Mammary epithelial cell (primary cell): ENCODE measurements at regions of chr7 and their contacts with region 1.

Region 1: DNA sequence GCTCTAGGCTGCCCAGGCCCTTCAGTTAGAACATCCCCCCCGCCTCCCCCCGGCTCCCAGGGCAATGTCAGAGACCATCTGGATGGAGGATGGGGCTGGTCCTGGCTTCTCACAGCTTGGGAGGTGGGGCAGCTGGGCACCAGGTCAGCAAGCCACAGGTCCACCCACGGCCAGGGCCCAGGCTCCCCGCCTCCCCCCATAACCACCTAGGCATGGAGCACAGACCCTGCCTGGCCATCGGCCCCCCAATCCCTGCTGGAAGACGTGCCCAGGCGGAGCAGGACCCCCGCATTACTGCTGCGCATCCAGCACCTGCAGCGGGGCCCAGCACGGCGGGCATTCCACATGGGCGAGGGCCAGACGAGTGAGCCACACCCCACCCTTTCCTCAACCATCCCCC is 169.6 kb downstream of the ELFN1 start:
- DNase-seq: no peak
- H3K4me3 ChIP-seq: no peak overlapping the region
- H3K27ac ChIP-seq: no peak overlapping the region
- H3K4me1 ChIP-seq: no peaks in the 10 kb centered on the region
- H3K27me3 ChIP-seq: no peaks in the 10 kb centered on the region
- CTCF ChIP-seq: no peak

Region 2: DNA sequence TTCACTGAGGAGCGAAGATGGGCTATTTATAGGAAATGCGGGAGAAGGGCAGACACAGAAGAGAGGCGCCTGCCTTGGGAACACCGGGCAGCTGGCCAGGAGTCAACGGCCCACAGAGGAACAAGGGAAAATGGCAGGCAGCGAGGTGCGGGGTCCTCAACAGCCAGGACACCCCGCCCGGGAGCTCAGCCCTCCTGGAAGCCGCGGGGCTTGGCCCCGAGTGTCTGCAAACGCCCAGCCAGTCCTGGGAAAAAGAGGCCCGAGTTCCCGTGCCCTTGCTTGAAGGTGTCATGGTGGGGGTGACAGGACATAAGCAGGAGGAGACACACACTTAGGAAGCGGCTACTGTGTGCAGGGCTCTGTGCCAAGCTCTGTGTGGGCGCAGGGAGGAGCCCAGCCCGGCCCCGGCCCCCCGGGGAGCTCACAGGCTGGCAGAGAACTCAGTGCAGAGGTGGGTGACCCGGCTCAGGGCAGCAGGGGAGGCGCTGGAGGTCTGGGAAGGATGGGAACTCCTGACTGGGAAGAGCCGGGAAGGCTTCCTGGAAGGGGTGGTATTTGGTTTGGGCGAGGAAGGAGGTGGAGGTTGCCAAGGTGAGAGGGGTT is 89.7 kb before region 1 on chr7:
- CTCF ChIA-PET with region 1: no interaction called
- dilution Hi-C with region 1: no loop called
- in situ Hi-C with region 1: no loop called
- intact Hi-C with region 1: no loop called
- DNase-seq: no peak
- H3K4me3 ChIP-seq: no peak overlapping the region
- H3K27ac ChIP-seq: no peak overlapping the region
- H3K4me1 ChIP-seq: no peaks in the 10 kb centered on the region
- H3K27me3 ChIP-seq: peaks cover 9% of the 10 kb centered on the region
- CTCF ChIP-seq: no peak

Region 3: DNA sequence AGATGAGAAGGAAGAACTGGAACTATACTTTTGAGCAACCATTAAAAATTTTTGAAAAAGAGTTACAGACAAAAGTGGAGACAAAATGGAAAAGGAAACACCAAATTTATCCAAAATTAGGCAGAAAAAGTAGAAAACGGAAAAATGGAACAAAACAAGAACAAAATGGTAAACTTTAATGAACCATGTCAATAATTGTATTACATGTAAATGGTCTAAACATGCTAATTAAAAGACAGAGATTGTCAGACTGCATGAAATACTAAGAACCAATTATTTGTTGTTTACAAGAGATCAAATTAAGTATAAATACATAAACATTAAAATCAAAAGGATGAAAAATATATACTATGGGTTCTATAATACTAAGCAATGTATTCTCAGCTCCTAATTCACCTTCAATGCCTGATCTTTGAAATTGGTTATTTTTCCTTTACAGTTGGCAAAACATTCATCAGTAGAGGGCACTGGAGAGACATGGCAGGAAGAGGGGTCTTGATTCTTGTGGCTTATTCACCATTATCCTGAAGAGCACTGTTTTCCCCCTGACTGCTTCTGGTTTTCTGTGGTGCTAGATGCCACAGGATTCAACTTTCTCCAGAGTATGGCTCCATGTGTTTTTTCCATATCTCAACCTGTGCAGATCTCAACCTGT is 44.7 kb before region 1 on chr7:
- CTCF ChIA-PET with region 1: no interaction called
- dilution Hi-C with region 1: loop called (anchors 5 kb)
- in situ Hi-C with region 1: no loop called
- intact Hi-C with region 1: no loop called
- DNase-seq: no peak
- H3K4me3 ChIP-seq: no peak overlapping the region
- H3K27ac ChIP-seq: no peak overlapping the region
- H3K4me1 ChIP-seq: no peaks in the 10 kb centered on the region
- H3K27me3 ChIP-seq: no peaks in the 10 kb centered on the region
- CTCF ChIP-seq: no peak

Region 4: DNA sequence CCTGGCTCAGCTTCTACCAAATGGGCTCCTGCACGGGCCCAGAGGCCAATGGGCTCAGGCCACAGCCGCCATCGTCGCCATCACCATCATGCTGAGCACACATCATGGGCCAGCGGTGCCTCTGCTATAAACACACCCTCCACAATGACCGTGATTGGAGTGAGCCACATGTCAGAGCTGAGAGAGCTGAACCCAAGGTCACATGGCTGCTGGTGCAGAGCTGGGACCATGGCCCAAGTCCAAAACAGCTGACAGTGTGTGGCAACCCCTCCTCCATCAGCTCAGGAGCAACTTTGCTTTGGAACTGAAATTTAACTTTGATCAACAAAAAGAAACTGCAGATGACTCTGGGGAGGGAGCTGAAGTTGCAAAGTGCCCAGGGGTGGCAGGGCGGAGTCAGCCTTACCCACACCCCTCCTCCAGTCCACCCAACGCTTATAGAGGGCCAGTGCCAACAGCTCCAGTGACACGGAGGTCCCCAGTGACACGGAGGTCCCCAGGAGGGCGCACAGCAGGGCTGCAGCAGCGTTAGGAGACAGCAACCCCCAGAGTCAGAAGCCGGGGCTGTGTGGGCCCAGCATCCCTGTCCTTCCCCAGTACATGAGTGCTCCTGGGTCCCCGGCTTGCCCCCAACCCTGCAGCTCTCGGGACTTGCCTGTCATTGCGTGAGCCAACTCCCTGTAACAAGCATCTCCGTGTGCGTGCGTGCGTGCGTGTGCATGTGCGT is 80.0 kb after region 1 on chr7:
- CTCF ChIA-PET with region 1: no interaction called
- dilution Hi-C with region 1: loop called (anchors 5 kb)
- in situ Hi-C with region 1: no loop called
- intact Hi-C with region 1: no loop called
- DNase-seq: no peak
- H3K4me3 ChIP-seq: no peak overlapping the region
- H3K27ac ChIP-seq: no peak overlapping the region
- H3K4me1 ChIP-seq: peaks cover 12% of the 10 kb centered on the region
- H3K27me3 ChIP-seq: no peaks in the 10 kb centered on the region
- CTCF ChIP-seq: no peak

Region 5: DNA sequence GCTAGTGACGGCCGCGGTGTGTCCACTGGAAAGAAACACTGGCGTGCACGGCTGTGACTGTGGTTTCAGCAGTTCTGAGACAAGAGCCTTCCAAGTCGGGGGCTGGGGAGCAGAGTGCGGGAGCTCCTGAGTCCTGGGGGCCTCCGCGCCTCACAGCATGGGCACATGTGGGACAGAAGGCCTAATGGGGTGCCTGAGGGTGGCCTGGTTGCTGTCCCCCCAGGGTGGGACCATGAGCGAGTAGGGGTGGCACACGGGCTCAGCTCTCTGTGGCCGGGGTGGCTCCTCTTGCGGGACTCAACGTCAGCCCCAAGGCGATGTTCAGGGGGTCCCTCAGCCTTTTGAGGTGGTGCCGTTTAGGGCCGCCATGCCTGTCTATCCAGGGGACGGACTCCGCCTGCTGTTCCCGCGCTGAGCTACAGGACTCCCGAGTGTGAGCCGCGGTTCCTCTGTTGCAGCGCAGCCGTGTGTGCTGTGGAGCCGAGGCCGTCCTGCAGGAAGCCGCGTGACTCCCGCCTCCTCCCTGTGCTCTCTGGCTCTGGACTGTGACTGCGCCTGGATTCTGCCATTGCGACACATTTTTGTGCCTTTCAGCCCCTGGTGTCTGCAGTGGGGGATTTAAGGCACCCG is 540.2 kb after region 1 on chr7:
- CTCF ChIA-PET with region 1: no interaction called
- dilution Hi-C with region 1: no loop called
- in situ Hi-C with region 1: no loop called
- intact Hi-C with region 1: no loop called
- DNase-seq: no peak
- H3K4me3 ChIP-seq: no peak overlapping the region
- H3K27ac ChIP-seq: no peak overlapping the region
- H3K4me1 ChIP-seq: no peaks in the 10 kb centered on the region
- H3K27me3 ChIP-seq: no peaks in the 10 kb centered on the region
- CTCF ChIP-seq: no peak